Left ventricle myocardium inferior (tissue), 1 donor: ENCODE measurements at regions of chr17 and their contacts with region 1.

Region 1: DNA sequence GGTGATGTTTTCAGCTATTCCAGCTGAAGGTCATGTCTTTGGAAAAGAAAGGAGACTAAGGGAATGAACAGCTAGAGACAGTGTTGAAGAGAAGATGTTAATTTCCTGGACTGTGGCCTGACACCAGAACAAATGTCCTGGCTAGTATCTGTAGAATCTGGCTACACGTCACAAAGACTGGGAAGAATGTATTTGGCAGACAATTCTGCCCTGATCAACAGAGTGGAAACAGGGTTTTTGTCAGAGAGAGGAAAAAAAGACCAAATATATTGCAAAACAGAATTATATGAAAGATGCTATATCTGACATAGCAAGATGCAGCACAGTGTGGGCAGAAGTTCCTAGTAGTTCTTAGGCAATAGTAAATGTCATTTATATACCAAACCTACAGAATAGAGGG is 17.0 kb upstream of the ANKFN1 start:
- DNase-seq: no peak
- H3K4me3 ChIP-seq: no peak overlapping the region
- H3K27ac ChIP-seq: no peak overlapping the region
- H3K4me1 ChIP-seq: no peaks in the 10 kb centered on the region
- H3K27me3 ChIP-seq: peaks cover 12% of the 10 kb centered on the region
- CTCF ChIP-seq: no peak

Region 2: GRCh38 chr17:56064506-56064905 is 71.8 kb before region 1 on chr17:
- intact Hi-C with region 1: no loop called
- DNase-seq: no peak
- H3K4me3 ChIP-seq: no peak overlapping the region
- H3K27ac ChIP-seq: no peak overlapping the region
- H3K4me1 ChIP-seq: no peaks in the 10 kb centered on the region
- H3K27me3 ChIP-seq: no peaks in the 10 kb centered on the region
- CTCF ChIP-seq: no peak

Region 3: DNA sequence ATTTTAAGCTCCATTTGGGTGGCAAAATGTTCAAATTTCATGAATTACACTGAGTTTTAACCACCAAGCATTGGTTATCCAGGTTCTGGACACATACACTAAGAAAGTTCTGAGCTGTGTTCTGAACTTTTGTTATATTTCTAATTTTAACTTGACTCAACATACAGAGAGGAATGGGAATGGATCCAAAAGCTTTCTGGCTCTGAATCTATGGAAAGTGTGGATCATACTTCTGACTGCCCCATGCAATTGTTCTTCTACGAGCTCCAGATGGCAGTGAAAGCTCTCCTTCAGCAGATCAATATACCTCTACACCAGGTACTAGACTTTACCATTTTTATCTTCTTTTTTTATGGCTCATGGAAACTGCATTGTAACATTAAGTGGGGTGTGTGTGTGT is 344.2 kb after region 1 on chr17:
- intact Hi-C with region 1: loop called (anchors 10 kb)
- DNase-seq: no peak
- H3K4me3 ChIP-seq: no peak overlapping the region
- H3K27ac ChIP-seq: no peak overlapping the region
- H3K4me1 ChIP-seq: no peaks in the 10 kb centered on the region
- H3K27me3 ChIP-seq: peaks cover 27% of the 10 kb centered on the region
- CTCF ChIP-seq: no peak